Esophagus muscularis mucosa (tissue), 4 donors: ENCODE measurements at regions of chr22 and their contacts with region 1.

Region 1: GRCh38 chr22:25362215-25362882 is 142.9 kb downstream of the CRYBB2 start:
- DNase-seq: peak; percentile 93
- H3K4me3 ChIP-seq: no peak overlapping the region
- H3K27ac ChIP-seq: peak overlapping the region in 2 of 4 donors; percentile 11 to 61
- H3K4me1 ChIP-seq: peaks cover 24 to 52% (median 47%) of the 10 kb centered on the region in 4 donors
- H3K27me3 ChIP-seq: no peaks in the 10 kb centered on the region
- CTCF ChIP-seq: peak; percentile 76 to 90 (median 77)
- EP300 ChIP-seq: no peak
- POLR2A ChIP-seq: no peak

Region 2: DNA sequence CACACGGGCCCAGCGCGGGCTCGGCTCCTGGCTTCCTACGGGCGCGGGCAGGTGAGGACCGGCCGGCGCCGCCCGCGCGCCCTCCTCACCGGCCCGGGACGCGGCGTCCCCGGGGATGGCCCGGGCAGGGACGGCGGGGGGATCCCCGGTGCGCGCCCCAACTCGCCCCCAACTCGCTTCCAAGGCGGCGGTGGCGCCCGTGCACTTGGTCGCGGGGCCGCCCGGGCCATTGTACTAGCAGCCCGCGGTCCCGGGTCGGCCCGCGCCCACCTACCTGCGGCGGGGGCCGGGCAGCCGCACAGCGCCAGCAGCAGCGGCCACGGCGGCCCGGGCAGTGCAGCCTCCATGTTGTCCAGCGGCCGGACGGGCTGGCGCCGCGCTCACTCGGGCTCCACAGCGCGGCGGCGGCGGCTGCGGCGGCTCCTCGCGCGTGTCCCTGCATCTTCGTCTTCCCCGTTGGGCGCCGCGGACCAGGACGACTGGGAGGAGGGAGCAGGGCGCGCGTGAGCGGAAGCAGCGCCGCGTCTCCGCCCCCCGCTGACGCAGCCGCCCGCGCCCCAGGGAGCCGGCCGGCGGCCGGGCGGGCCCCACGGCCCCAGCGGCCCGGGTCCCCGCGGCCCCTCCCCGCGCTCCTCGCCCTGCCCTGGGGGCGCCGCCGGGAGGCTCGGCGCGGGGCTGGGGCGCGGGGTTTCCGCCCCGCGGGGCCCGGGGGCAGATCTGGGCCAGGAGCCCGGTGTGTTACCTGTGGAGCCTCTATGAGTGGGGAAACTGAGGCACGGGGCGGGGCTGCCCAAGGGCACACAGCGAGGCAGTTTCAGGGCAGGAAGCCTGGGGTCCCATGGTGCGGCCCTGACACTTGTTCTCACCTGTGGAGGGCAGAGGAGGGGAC is 42.8 kb after region 1 on chr22:
- intact Hi-C with region 1: loop called (anchors 5 kb)
- DNase-seq: no peak
- H3K4me3 ChIP-seq: peak overlapping the region; percentile 84 to 98 (median 92)
- H3K27ac ChIP-seq: peak overlapping the region; percentile 86 to 95 (median 94)
- H3K4me1 ChIP-seq: peaks cover 44 to 52% (median 51%) of the 10 kb centered on the region in 4 donors
- H3K27me3 ChIP-seq: no peaks in the 10 kb centered on the region
- CTCF ChIP-seq: no peak
- EP300 ChIP-seq: no peak
- POLR2A ChIP-seq: no peak

Region 3: GRCh38 chr22:25452116-25452700 is 89.9 kb after region 1 on chr22:
- intact Hi-C with region 1: loop called (anchors 5 kb)
- DNase-seq: no peak
- H3K4me3 ChIP-seq: peak overlapping the region in 1 of 4 donors; percentile 6
- H3K27ac ChIP-seq: no peak overlapping the region
- H3K4me1 ChIP-seq: peaks cover 8 to 50% (median 42%) of the 10 kb centered on the region in 4 donors
- H3K27me3 ChIP-seq: no peaks in the 10 kb centered on the region
- CTCF ChIP-seq: no peak
- EP300 ChIP-seq: no peak
- POLR2A ChIP-seq: no peak